ENCODE measurements at regions of chr1 and their contacts with region 1.

Region 1: DNA sequence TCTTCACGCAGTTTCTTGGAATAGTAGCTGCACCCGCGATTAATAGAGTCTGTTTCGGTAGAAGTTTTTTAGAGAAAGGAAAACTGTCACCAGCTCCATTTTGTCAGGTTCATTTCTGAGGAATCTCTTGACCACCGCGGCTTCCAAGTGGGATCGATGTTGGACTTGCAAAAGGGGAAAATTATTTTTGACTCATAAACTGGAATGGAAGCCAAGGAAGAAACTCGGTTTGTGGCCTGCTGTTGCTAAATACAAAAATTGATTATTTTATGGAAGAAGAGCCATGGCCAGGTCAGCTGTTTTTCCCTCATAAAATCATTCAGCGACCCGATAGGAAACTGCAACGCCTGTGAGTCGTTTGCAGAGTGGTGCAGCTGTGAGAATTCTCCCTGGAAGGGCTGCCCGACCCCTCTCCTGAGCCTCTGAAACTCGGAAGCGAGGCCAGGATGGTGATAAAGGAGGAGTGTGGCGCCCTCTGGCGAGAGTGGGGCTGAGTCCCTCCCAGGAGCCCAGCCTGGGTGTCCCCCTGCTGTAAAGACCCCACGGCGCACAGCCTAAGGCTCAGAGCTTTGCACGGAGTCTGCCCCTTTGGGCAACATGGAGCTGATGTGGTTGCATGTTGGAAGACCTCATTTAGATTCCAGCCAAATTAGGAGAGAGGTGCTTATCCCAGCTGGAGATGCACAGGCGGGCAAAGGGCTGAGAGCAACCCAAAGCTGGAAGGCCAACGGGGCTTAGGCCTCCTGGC is 83.6 kb upstream of the SLC25A33 start:
- DNase-seq: peak; percentile 80 to 90 (median 86)
- H3K4me3 ChIP-seq: no peak overlapping the region
- H3K27ac ChIP-seq: peak overlapping the region in 1 of 2 donors; percentile 9
- H3K4me1 ChIP-seq: peaks cover 10% of the 10 kb centered on the region
- H3K27me3 ChIP-seq: no peaks in the 10 kb centered on the region
- CTCF ChIP-seq: peak; percentile 49 to 88 (median 80)
- EP300 ChIP-seq: no peak
- POLR2A ChIP-seq: no peak

Region 2: DNA sequence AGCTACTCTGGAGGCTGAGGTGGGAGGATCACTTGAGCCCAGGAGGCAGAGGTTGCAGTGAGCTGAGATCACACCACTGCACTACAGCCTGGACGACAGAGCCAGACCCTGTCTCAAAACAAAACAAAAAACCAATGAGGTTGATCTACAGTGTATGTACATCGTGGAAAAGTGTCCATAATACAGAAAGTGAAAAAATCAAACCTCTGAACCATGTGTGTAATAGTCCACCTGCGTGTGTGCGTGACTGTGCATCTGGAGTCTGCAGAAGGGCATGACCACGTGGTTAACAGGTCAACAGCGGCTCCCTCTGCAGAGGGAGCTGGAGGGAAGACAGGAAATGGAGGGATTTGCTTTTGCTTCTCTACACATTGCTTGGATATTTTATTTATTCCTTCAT is 544.7 kb before region 1 on chr1:
- intact Hi-C with region 1: loop called in 1 of 4 experiments (anchors 10 kb)
- DNase-seq: no peak
- H3K4me3 ChIP-seq: no peak overlapping the region
- H3K27ac ChIP-seq: no peak overlapping the region
- H3K4me1 ChIP-seq: no peaks in the 10 kb centered on the region
- H3K27me3 ChIP-seq: no peaks in the 10 kb centered on the region
- CTCF ChIP-seq: no peak
- EP300 ChIP-seq: no peak
- POLR2A ChIP-seq: no peak

Region 3: DNA sequence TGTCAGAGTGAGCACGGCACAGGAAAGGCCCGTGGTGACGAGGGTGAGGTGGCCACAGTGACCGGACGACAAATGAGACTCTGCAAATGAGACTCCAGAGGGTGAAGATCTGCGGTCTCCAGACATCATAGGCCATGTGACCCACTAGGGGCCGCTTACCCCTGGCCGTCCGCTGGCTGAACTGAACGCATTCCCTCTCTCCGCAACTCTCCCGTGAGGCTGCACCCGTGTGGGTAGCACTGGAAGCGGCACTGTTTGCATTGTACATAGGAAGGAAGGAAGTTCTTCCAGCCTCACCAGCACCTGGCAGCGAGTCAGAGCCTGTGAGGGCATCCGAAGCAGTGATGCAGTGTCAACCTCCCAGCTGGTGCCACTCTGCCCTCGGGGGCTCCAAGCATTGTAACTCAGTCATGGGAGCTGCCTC is 186.6 kb before region 1 on chr1:
- intact Hi-C with region 1: loop called in 2 of 4 experiments (anchors 1 to 10 kb)
- DNase-seq: no peak
- H3K4me3 ChIP-seq: no peak overlapping the region
- H3K27ac ChIP-seq: no peak overlapping the region
- H3K4me1 ChIP-seq: peaks cover 3% of the 10 kb centered on the region
- H3K27me3 ChIP-seq: no peaks in the 10 kb centered on the region
- CTCF ChIP-seq: no peak
- EP300 ChIP-seq: no peak
- POLR2A ChIP-seq: no peak

Region 4: DNA sequence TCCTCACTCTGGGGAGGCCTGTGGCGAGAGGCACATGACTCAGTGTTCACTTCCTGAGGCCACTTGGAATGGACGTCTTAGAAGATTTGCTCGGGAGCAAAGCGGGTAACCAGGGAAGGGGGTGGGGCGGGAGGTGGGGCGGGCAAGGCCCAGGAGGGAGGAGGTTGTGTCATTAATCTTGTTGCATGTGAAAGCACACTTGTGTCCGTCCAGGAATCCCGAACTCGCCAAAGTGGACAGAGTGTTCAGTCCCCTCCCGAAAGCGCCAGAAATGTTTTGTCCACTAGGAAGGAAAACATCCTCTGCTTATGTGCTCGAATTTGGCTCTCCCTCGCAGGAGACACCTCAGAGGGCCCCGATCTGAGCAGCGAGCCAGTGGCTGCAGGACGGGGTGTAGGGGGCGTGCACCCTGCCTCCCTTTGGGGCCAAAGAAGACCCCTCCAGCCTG is 78.8 kb before region 1 on chr1:
- intact Hi-C with region 1: loop called in 1 of 4 experiments (anchors 5 kb)
- DNase-seq: peak; percentile 61 to 89 (median 80)
- H3K4me3 ChIP-seq: no peak overlapping the region
- H3K27ac ChIP-seq: peak overlapping the region; percentile 62 to 83
- H3K4me1 ChIP-seq: peaks cover 42% of the 10 kb centered on the region
- H3K27me3 ChIP-seq: no peaks in the 10 kb centered on the region
- CTCF ChIP-seq: peak in 1 of 3 donors; percentile 42
- EP300 ChIP-seq: peak; percentile 83
- POLR2A ChIP-seq: no peak

Measured in ovary (tissue), 10 donors.